Endothelial cell of umbilical vein (primary cell): ENCODE measurements at regions of chr3 and their contacts with region 1.

Region 1: GRCh38 chr3:137105277-137105977 is 147.6 kb downstream of the IL20RB start:
- DNase-seq: peak; percentile 74
- H3K4me3 ChIP-seq: no peak overlapping the region
- H3K27ac ChIP-seq: no peak overlapping the region
- H3K4me1 ChIP-seq: no peaks in the 10 kb centered on the region
- H3K27me3 ChIP-seq: peaks cover 12 to 17% of the 10 kb centered on the region in 2 experiments
- CTCF ChIP-seq: peak; percentile 42 to 50
- POLR2A ChIP-seq: no peak

Region 2: GRCh38 chr3:137259701-137260100 is 154.3 kb after region 1 on chr3:
- CTCF ChIA-PET with region 1: no interaction called
- POLR2A ChIA-PET with region 1: no interaction called
- dilution Hi-C with region 1: no loop called
- intact Hi-C with region 1: no loop called
- DNase-seq: no peak
- H3K4me3 ChIP-seq: no peak overlapping the region
- H3K27ac ChIP-seq: no peak overlapping the region
- H3K4me1 ChIP-seq: no peaks in the 10 kb centered on the region
- H3K27me3 ChIP-seq: no peaks in the 10 kb centered on the region
- CTCF ChIP-seq: no peak
- POLR2A ChIP-seq: no peak

Region 3: GRCh38 chr3:137970914-137971831 is 865.7 kb after region 1 on chr3:
- CTCF ChIA-PET with region 1: interaction called, 16 read pairs
- POLR2A ChIA-PET with region 1: no interaction called
- dilution Hi-C with region 1: no loop called
- intact Hi-C with region 1: loop called (anchors 1 kb)
- DNase-seq: peak; percentile 59
- H3K4me3 ChIP-seq: no peak overlapping the region
- H3K27ac ChIP-seq: no peak overlapping the region
- H3K4me1 ChIP-seq: no peaks in the 10 kb centered on the region
- H3K27me3 ChIP-seq: peaks cover 2 to 5% of the 10 kb centered on the region in 2 experiments
- CTCF ChIP-seq: peak; percentile 82 to 92
- POLR2A ChIP-seq: no peak

Region 4: GRCh38 chr3:138051946-138052802 is 946.7 kb after region 1 on chr3:
- CTCF ChIA-PET with region 1: interaction called, 30 read pairs
- POLR2A ChIA-PET with region 1: no interaction called
- dilution Hi-C with region 1: no loop called
- intact Hi-C with region 1: loop called (anchors 1 kb)
- DNase-seq: peak; percentile 38
- H3K4me3 ChIP-seq: no peak overlapping the region
- H3K27ac ChIP-seq: no peak overlapping the region
- H3K4me1 ChIP-seq: no peaks in the 10 kb centered on the region
- H3K27me3 ChIP-seq: no peaks in the 10 kb centered on the region
- CTCF ChIP-seq: peak; percentile 60 to 72
- POLR2A ChIP-seq: no peak